ENCODE measurements at regions of chr3 and their contacts with region 1.

Region 1: DNA sequence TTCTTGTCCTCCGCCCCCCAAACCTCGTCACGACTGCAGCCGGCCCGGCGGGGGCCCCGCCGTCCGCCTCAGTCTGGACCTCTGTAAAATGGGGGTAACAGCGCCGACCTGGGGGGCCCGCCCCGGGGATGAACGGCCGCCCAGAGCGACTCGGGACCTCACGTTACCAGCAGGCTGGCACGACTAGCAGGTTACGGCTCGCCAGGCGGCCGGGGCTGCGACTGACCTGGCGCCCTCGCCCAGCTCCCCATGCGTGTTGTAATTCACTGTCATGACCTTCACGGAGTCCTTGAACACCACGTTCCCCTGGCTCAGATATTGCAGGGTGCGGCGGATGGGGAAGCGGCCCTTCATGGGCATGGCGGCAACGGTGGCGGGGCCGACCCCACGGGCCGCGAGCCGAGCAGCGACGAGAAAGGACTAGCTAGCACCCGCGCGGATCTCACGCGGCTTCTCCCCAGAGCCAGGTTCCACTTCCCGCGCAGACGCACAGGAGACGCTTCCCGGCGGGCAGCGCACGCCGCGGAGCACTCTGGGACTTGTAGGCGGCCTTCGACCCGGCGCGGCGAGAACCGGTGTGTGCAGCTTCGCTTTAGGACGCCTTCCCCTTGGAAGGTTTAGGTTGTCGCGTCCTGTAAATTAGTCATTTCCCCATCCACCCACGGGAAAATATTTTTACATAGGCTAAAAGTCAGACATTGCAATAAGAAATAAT is at the start of gene MRPS25:
- DNase-seq: peak; percentile 96
- H3K4me3 ChIP-seq: peak within 1 kb of the TSS; percentile 40 to 71 (median 66)
- H3K27ac ChIP-seq: peak within 1 kb of the TSS; percentile 42
- H3K4me1 ChIP-seq: peaks cover 10% of the 10 kb centered on the region
- H3K27me3 ChIP-seq: no peaks in the 10 kb centered on the region
- CTCF ChIP-seq: no peak
- POLR2A ChIP-seq: peak; percentile 96
- total RNA-seq, gene MRPS25: 58.1 and 68.7 TPM in 2 replicates

Region 2: GRCh38 chr3:13141991-13142412 is 1923.0 kb before region 1 on chr3:
- CTCF ChIA-PET with region 1: no interaction called
- POLR2A ChIA-PET with region 1: no interaction called
- dilution Hi-C with region 1: no loop called
- intact Hi-C with region 1: no loop called
- DNase-seq: no peak
- H3K4me3 ChIP-seq: no peak overlapping the region
- H3K27ac ChIP-seq: no peak overlapping the region
- H3K4me1 ChIP-seq: no peaks in the 10 kb centered on the region
- H3K27me3 ChIP-seq: no peaks in the 10 kb centered on the region
- CTCF ChIP-seq: no peak
- POLR2A ChIP-seq: no peak

Region 3: GRCh38 chr3:15042936-15043335 is 22.1 kb before region 1 on chr3:
- CTCF ChIA-PET with region 1: interaction called, 5 read pairs
- POLR2A ChIA-PET with region 1: no interaction called
- dilution Hi-C with region 1: no loop called
- intact Hi-C with region 1: loop called (anchors 1 kb)
- DNase-seq: peak; percentile 76
- H3K4me3 ChIP-seq: no peak overlapping the region
- H3K27ac ChIP-seq: peak overlapping the region; percentile 71
- H3K4me1 ChIP-seq: peaks cover 36% of the 10 kb centered on the region
- H3K27me3 ChIP-seq: no peaks in the 10 kb centered on the region
- CTCF ChIP-seq: no peak
- POLR2A ChIP-seq: no peak

Region 4: DNA sequence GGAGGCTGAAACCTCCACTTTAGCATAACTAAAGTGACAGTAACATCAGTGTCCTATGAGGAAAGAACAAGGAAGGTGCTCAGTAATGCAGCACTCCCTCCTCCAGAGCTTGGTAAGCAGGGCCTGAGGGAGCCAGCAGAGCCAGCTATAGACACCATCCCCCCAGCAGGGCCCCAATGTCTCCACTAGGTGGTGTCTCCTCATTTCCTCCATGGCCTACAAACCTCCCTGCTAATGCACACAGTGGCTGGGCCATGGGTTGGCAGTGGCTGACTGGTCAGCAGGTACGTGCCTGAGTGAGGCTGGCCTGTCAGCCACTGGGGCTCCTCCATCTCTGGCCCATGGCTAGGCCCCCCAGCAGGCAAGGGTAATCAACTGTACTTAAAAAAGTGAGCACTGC is 13.5 kb before region 1 on chr3:
- CTCF ChIA-PET with region 1: interaction called, 17 read pairs
- POLR2A ChIA-PET with region 1: no interaction called
- dilution Hi-C with region 1: no loop called
- intact Hi-C with region 1: loop called (anchors 2 kb)
- DNase-seq: peak; percentile 58
- H3K4me3 ChIP-seq: no peak overlapping the region
- H3K27ac ChIP-seq: no peak overlapping the region
- H3K4me1 ChIP-seq: no peaks in the 10 kb centered on the region
- H3K27me3 ChIP-seq: no peaks in the 10 kb centered on the region
- CTCF ChIP-seq: peak; percentile 70 to 76
- POLR2A ChIP-seq: no peak

Region 5: DNA sequence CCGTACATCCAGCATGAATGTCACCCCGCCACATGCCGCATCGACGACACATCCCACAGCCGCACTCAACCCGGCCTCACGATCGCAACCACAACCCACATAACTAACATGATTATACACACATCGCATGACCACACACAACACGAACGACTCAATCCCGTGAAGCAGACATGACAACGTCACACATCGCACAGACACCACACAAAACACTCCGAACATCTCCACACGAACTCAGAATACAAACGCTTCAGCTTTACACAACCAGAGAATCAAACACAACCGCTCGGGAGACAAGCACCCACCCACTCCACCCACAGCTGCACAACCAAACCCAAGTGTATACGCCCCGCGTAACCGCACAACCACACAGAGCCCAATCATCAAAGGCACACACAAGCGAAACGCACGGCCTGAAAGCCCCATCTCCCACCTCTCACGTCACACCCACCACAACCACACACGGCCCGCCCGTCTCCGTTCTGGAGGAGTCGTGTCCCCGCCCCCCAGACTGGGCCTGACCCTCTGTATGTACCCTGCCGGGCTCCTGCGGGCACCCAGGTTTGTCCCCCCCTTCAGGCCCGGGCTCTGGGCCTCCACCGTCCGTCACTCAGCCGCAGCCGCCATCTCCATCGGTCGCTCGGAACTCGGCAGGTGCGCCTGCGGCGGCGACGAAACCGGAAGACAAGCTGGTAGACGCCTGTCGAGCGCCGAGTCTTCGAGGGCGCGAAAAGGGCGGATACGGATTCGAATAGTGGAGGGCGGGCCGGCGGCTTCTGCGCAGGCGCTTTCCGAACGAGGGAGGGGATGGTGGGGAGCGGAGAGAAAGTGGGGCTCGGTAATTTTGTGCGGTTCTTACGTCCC is 33.7 kb after region 1 on chr3 and contains the start of gene RBSN:
- CTCF ChIA-PET with region 1: interaction called, 6 read pairs
- POLR2A ChIA-PET with region 1: no interaction called
- dilution Hi-C with region 1: no loop called
- intact Hi-C with region 1: loop called (anchors 1 kb)
- DNase-seq: peak; percentile 96
- H3K4me3 ChIP-seq: peak within 1 kb of the TSS; percentile 87 to 98 (median 89)
- H3K27ac ChIP-seq: peak within 1 kb of the TSS; percentile 45
- H3K4me1 ChIP-seq: peaks cover 13% of the 10 kb centered on the region
- H3K27me3 ChIP-seq: no peaks in the 10 kb centered on the region
- CTCF ChIP-seq: no peak
- POLR2A ChIP-seq: peak; percentile 69
- total RNA-seq, gene RBSN: 23.1 and 23.6 TPM in 2 replicates

Region 6: DNA sequence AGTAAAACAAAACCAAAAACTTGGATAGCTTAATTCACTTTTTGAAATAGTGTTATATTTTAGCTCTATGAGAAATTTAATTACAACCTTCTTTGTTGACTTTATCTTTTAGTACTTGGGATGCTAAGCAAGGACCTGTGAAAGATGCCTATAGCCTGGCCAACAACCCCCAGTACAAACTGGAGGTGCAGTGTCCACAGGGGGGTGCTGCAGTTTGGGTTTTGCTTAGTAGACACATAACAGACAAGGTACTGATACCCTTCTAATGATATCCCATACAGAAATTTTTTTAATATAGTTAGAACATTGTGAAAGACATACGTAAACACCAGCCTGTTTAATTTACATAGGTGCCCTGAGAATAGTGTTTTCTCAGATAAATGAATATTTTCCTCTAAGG is 176.3 kb after region 1 on chr3:
- CTCF ChIA-PET with region 1: no interaction called
- POLR2A ChIA-PET with region 1: no interaction called
- dilution Hi-C with region 1: no loop called
- intact Hi-C with region 1: no loop called
- DNase-seq: peak; percentile 40
- H3K4me3 ChIP-seq: no peak overlapping the region
- H3K27ac ChIP-seq: no peak overlapping the region
- H3K4me1 ChIP-seq: no peaks in the 10 kb centered on the region
- H3K27me3 ChIP-seq: no peaks in the 10 kb centered on the region
- CTCF ChIP-seq: peak; percentile 29 to 33
- POLR2A ChIP-seq: no peak